ENCODE measurements at regions of chr22 and their contacts with region 1.

Region 1: GRCh38 chr22:40215266-40215665 is 37.5 kb downstream of the TNRC6B start:
- DNase-seq: no peak
- ATAC-seq: peak; percentile 36
- H3K4me3 ChIP-seq: peak overlapping the region; percentile 28
- H3K4me3 Mint-ChIP-seq: peak overlapping the region; percentile 38 to 86 (median 70)
- H3K27ac ChIP-seq: peak overlapping the region; percentile 34
- H3K27ac Mint-ChIP-seq: peak overlapping the region; percentile 36 to 97 (median 90)
- H3K4me1 ChIP-seq: peaks cover 51 to 84% of the 10 kb centered on the region in 2 donors
- H3K4me1 Mint-ChIP-seq: peaks cover 82 to 95% (median 92%) of the 10 kb centered on the region in 7 donors
- H3K27me3 ChIP-seq: no peaks in the 10 kb centered on the region
- H3K27me3 Mint-ChIP-seq: no peaks in the 10 kb centered on the region

Region 2: DNA sequence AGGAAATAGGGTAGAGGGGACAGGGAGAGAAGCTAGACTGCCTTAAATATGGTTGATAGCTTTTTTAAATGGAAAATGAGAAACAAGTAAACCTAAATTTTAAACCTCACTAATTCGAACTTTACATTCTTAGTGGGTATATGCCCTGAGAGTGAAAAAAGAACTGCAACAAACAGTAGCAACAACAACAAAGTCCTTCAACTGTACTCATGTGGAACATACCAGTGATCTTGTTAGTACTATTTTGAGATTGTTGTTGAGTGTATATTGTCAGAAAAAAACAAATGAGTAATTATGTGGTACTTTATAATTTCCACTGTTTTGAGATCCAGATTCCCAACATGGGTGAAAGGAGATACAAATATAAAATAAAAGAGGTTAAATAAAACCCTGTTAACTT is 126.4 kb before region 1 on chr22:
- CTCF ChIA-PET with region 1: no interaction called
- POLR2A ChIA-PET with region 1: no interaction called
- intact Hi-C with region 1: no loop called
- DNase-seq: no peak
- ATAC-seq: no peak
- H3K4me3 ChIP-seq: no peak overlapping the region
- H3K4me3 Mint-ChIP-seq: peak overlapping the region in 1 of 10 donors; percentile 6
- H3K27ac ChIP-seq: peak overlapping the region; percentile 21
- H3K27ac Mint-ChIP-seq: peak overlapping the region in 7 of 9 donors; percentile 5 to 90 (median 69)
- H3K4me1 ChIP-seq: peaks cover 2 to 40% of the 10 kb centered on the region in 2 donors
- H3K4me1 Mint-ChIP-seq: peaks cover 27 to 76% (median 54%) of the 10 kb centered on the region in 7 donors
- H3K27me3 ChIP-seq: no peaks in the 10 kb centered on the region
- H3K27me3 Mint-ChIP-seq: no peaks in the 10 kb centered on the region

Region 3: GRCh38 chr22:40116496-40117200 is 98.6 kb before region 1 on chr22:
- CTCF ChIA-PET with region 1: no interaction called
- POLR2A ChIA-PET with region 1: no interaction called
- intact Hi-C with region 1: loop called in 1 of 2 experiments (anchors 5 kb)
- DNase-seq: peak in 8 of 9 donors; percentile 26 to 88 (median 84)
- ATAC-seq: peak; percentile 95
- H3K4me3 ChIP-seq: peak overlapping the region; percentile 6
- H3K4me3 Mint-ChIP-seq: peak overlapping the region; percentile 26 to 89 (median 78)
- H3K27ac ChIP-seq: peak overlapping the region; percentile 48
- H3K27ac Mint-ChIP-seq: peak overlapping the region; percentile 79 to 94 (median 87)
- H3K4me1 ChIP-seq: peaks cover 24 to 64% of the 10 kb centered on the region in 2 donors
- H3K4me1 Mint-ChIP-seq: peaks cover 31 to 95% (median 92%) of the 10 kb centered on the region in 7 donors
- H3K27me3 ChIP-seq: no peaks in the 10 kb centered on the region
- H3K27me3 Mint-ChIP-seq: no peaks in the 10 kb centered on the region

Region 4: DNA sequence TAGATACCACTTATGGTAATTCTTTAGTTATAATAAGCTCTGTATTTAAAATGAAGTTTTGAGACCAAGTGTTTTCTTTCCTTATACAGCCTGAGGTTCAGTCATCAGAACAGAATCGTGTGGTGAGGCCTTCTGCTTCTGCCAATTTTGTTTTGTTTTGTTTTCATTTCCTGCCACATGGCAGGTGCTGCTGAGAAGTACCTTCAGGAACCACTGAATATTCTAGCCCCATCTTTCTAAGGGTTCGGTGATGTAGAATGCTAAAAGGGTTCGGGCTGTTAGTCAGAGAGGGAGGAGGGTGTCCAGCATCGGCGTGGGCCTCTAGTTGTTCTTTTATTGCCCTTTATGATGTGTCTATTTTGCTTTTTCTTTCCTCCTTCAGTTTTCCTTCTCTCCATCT is 11.7 kb before region 1 on chr22:
- CTCF ChIA-PET with region 1: no interaction called
- POLR2A ChIA-PET with region 1: interaction called, 9 read pairs
- intact Hi-C with region 1: loop called in 1 of 2 experiments (anchors 2 kb)
- DNase-seq: peak in 7 of 9 donors; percentile 46 to 72 (median 60)
- ATAC-seq: peak; percentile 93
- H3K4me3 ChIP-seq: peak overlapping the region; percentile 5
- H3K4me3 Mint-ChIP-seq: peak overlapping the region; percentile 60 to 73 (median 66)
- H3K27ac ChIP-seq: peak overlapping the region; percentile 54
- H3K27ac Mint-ChIP-seq: peak overlapping the region; percentile 74 to 95 (median 85)
- H3K4me1 ChIP-seq: peaks cover 24 to 49% of the 10 kb centered on the region in 2 donors
- H3K4me1 Mint-ChIP-seq: peaks cover 50 to 88% (median 79%) of the 10 kb centered on the region in 7 donors
- H3K27me3 ChIP-seq: no peaks in the 10 kb centered on the region
- H3K27me3 Mint-ChIP-seq: no peaks in the 10 kb centered on the region

Region 5: DNA sequence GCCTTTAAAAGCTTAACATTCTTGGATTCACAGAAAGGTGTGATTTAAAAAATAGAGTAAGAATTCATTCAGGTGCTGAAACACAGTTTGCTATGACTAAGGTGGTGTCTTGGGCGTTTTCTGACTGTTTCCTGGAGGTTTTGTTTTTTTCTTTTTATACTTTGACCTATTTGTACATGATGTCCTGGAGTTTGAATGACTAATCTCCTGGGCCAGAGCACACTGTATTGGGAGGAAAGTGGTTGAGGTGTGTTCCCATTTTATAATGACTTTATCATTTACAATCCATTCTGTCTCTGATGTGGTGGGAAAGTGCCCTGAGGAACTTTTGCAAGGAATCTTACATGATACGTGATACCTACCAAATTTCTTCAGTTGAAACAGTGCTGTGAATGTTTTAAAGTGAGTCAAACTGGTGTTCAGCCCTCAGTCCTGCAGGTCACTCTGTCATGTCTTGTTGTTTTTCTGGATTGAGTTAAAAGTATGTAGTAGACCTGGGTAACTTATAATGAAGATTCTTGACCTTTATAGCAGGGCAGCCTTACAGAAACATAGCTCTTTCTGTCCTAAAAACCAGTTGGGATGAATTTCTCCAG is 43.3 kb after region 1 on chr22:
- CTCF ChIA-PET with region 1: no interaction called
- POLR2A ChIA-PET with region 1: no interaction called
- intact Hi-C with region 1: no loop called
- DNase-seq: no peak
- ATAC-seq: no peak
- H3K4me3 ChIP-seq: no peak overlapping the region
- H3K4me3 Mint-ChIP-seq: peak overlapping the region in 9 of 10 donors; percentile 20 to 72 (median 54)
- H3K27ac ChIP-seq: peak overlapping the region; percentile 2
- H3K27ac Mint-ChIP-seq: peak overlapping the region; percentile 13 to 87 (median 75)
- H3K4me1 ChIP-seq: peaks cover 17 to 24% of the 10 kb centered on the region in 2 donors
- H3K4me1 Mint-ChIP-seq: peaks cover 38 to 83% (median 73%) of the 10 kb centered on the region in 7 donors
- H3K27me3 ChIP-seq: no peaks in the 10 kb centered on the region
- H3K27me3 Mint-ChIP-seq: no peaks in the 10 kb centered on the region

Region 6: DNA sequence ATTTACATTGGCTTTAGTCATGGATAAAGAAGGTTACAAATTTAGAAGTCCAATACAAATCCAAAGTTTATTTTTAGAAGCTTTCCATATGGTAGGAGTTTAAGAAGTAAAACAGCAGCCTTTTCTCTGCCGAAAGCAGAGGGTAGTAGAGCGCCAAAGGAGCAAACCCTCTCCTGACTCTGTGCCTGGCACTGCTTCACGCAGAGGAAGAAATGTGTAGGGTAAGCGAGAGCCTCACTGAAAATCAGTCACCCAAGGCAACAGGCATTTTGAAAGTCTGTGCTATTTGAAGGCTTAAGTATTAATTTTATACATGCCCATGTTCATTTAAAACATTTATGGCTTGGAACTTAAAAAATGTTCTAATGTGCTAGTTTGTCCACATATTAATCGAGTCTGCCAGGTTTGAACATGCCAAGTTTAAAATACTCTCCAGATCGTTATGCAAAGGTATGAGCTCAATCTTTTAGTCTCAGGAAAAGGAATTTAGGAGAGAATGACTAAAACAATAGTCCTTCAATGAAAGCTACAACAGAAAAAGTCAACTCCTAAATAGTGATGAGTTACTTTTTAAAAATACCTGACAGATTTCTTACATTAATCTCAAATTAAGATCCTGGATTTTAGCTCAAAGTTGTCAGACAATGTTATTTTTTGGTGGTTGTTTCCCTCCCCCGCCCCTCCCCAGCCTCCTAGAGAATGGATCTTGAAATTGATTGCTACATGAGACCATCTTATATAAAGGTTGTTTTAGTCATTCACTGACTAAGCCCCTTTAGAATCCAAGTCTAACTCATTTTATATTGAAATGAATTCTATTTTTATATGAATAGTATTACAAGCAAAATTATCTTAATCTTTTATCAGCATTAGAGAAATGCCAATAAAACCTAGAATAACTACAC is 382.5 kb after region 1 on chr22:
- CTCF ChIA-PET with region 1: no interaction called
- POLR2A ChIA-PET with region 1: no interaction called
- intact Hi-C with region 1: no loop called
- DNase-seq: no peak
- ATAC-seq: no peak
- H3K4me3 ChIP-seq: no peak overlapping the region
- H3K4me3 Mint-ChIP-seq: no peak overlapping the region
- H3K27ac ChIP-seq: no peak overlapping the region
- H3K27ac Mint-ChIP-seq: peak overlapping the region in 1 of 9 donors; percentile 41
- H3K4me1 ChIP-seq: peaks cover 0 to 9% of the 10 kb centered on the region in 2 donors
- H3K4me1 Mint-ChIP-seq: peaks cover 21 to 78% (median 69%) of the 10 kb centered on the region in 7 donors
- H3K27me3 ChIP-seq: no peaks in the 10 kb centered on the region
- H3K27me3 Mint-ChIP-seq: no peaks in the 10 kb centered on the region

Measured in naive thymus-derived CD4-positive, alpha-beta T cell (primary cell).